AG04449 (cell line): ENCODE measurements at regions of chr14 and their contacts with region 1.

Region 1: DNA sequence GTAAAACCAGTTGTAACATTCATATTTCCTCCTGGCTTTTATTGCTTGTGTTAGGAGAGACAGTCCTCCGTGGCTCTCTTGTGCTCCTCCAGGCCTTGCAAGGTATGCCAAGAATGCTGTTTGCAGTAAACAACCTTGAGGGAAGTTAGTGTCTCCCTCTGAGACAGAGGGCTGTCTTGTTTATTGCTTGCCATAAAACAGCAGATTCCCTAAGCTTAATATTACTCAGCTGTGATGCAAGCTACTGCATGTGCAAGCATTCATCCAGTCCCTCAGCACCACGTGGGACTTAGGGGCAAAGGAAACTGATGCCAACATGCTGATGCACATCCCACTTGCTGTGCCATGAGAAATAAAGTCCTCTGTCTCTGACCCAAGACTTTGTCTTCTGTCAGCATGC is 6.6 kb downstream of the POMT2 start:
- DNase-seq: peak; percentile 80
- H3K4me3 ChIP-seq: no peak overlapping the region
- CTCF ChIP-seq: no peak

Region 2: GRCh38 chr14:77014004-77014604 is 299.9 kb before region 1 on chr14:
- CTCF ChIA-PET with region 1: no interaction called
- POLR2A ChIA-PET with region 1: no interaction called
- DNase-seq: no peak
- H3K4me3 ChIP-seq: no peak overlapping the region
- CTCF ChIP-seq: no peak

Region 3: DNA sequence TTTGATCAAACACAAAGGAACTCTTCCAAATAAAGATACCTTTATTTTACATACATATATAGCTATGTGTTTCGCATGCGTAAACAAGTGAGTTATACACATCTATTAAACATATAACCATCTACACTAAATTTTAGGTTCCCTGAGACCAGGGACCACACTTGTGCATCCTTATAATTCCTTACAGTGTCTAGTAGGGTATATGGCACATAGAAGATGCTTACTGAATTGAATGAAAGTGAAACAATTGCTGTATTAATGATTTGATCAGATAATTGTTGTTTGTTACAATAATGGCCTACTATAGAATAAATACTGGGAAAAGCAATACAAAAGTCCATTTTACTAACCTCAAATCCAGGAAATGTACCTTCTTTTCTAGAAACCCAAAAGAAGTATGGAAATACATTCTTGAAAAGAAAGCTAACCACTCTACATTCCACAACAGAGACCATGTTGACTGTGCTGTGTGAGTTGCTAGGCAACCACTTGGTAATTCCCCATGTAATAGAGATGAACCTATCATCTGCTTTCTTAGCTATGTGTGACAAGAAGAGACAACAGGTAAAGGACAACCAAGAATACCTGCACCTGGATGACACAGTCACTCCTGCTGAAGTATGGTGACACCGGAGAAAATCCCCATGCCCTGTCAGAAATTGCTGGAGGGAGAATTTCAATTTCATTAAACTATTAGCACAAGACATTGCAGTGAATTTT is 227.9 kb before region 1 on chr14:
- CTCF ChIA-PET with region 1: no interaction called
- POLR2A ChIA-PET with region 1: no interaction called
- DNase-seq: no peak
- H3K4me3 ChIP-seq: no peak overlapping the region
- CTCF ChIP-seq: no peak

Region 4: GRCh38 chr14:77097700-77098528 is 216.1 kb before region 1 on chr14 and contains the start of gene CIPC:
- CTCF ChIA-PET with region 1: interaction called, 12 read pairs
- POLR2A ChIA-PET with region 1: no interaction called
- DNase-seq: peak; percentile 88
- H3K4me3 ChIP-seq: peak within 1 kb of the TSS; percentile 100
- CTCF ChIP-seq: no peak

Region 5: GRCh38 chr14:77219591-77219990 is 94.5 kb before region 1 on chr14:
- CTCF ChIA-PET with region 1: no interaction called
- POLR2A ChIA-PET with region 1: no interaction called
- DNase-seq: no peak
- H3K4me3 ChIP-seq: no peak overlapping the region
- CTCF ChIP-seq: no peak

Region 6: DNA sequence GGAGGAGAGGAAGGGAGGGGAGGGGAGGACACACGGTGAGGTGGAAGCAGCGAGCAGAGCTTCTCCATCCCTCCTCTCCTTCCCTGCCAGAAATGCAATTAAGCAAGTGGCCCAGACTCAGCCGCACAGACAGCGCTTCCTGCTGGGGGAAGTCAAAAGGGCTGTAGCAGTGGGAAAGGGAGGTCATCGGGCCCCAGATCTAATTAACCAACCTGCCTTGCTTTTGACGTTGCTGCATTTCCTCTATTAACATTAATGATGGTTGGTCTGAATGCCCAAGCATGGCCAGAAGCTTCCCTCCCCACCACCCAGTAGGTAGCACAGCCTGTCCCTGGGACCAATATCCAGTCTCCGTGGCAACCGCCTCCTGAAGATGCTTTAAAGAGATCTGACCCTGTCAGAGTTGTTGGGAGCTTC is 38.4 kb before region 1 on chr14:
- CTCF ChIA-PET with region 1: interaction called, 14 read pairs
- POLR2A ChIA-PET with region 1: no interaction called
- DNase-seq: no peak
- H3K4me3 ChIP-seq: no peak overlapping the region
- CTCF ChIP-seq: no peak

Region 7: DNA sequence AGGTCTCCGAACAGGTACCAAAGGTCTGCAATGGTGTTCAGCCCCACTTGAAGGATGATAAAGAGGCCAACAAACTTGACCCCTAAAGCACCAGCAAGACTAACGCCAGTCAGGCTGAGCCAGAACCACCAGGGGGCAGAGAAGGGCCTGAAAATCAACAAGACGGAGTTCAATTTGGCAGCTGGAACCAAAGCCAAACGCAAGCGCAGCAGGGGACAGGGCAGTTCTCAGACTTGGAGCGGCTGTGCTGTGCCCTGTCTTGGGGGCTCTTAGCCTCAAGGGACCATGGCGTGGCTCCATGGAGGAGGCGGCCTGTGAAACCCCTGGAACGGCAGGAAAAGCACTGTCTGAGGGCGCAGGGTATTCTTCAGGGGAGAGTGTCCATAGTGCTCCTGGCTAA is 12.9 kb before region 1 on chr14:
- CTCF ChIA-PET with region 1: interaction called, 416 read pairs
- POLR2A ChIA-PET with region 1: interaction called, 12 read pairs
- DNase-seq: no peak
- H3K4me3 ChIP-seq: no peak overlapping the region
- CTCF ChIP-seq: peak; percentile 90

Region 8: GRCh38 chr14:77339407-77339806 is 25.4 kb after region 1 on chr14:
- CTCF ChIA-PET with region 1: interaction called, 20 read pairs
- POLR2A ChIA-PET with region 1: no interaction called
- DNase-seq: no peak
- H3K4me3 ChIP-seq: no peak overlapping the region
- CTCF ChIP-seq: no peak